A673 (cell line): ENCODE measurements at regions of chr3 and their contacts with region 1.

Region 1: DNA sequence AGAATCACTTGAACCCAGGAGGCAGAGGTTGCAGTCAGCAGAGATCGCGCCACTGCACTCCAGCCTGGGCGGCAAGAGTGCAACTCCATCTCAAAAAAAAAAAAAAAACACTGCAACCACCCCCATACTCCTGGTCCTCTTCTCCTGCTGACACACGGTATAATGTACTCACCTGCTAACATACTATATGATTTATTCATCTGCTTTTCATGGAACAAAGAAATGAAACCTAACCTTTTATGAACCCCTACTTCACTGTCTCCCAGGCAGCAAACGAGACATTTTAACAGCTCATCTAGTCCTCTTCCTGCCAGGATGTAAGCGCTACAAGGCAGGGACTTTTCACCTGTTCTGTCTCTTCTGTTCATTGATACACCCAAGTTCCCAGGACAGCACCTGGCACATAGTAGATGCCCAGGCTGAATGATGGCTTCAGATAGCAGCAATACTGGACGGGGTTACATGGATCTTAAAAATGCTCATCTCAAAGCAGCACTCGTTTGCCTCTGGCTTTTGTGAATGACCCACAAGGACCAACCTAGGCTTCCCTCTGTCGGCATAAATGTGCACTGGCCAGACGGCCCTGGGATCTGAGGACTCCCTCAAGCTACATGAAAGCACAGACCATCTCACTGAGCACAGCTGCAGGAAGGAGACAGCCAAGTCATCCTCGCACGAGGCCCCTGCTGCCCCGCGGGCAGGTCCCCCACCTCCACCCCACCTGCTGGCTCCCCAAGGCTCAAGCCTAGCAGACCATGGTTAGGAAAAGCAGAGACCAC is 20.3 kb downstream of the XXYLT1 start:
- DNase-seq: no peak
- H3K4me3 ChIP-seq: no peak overlapping the region
- H3K27ac ChIP-seq: no peak overlapping the region
- H3K4me1 ChIP-seq: peaks cover 36% of the 10 kb centered on the region
- H3K27me3 ChIP-seq: no peaks in the 10 kb centered on the region
- CTCF ChIP-seq: no peak

Region 2: GRCh38 chr3:194782698-194783404 is 467.8 kb before region 1 on chr3:
- CTCF ChIA-PET with region 1: no interaction called
- POLR2A ChIA-PET with region 1: interaction called, 11 read pairs
- intact Hi-C with region 1: no loop called
- DNase-seq: no peak
- H3K4me3 ChIP-seq: no peak overlapping the region
- H3K27ac ChIP-seq: no peak overlapping the region
- H3K4me1 ChIP-seq: no peaks in the 10 kb centered on the region
- H3K27me3 ChIP-seq: no peaks in the 10 kb centered on the region
- CTCF ChIP-seq: no peak

Region 3: GRCh38 chr3:195352895-195353488 is 102.3 kb after region 1 on chr3:
- CTCF ChIA-PET with region 1: no interaction called
- POLR2A ChIA-PET with region 1: no interaction called
- intact Hi-C with region 1: no loop called
- DNase-seq: peak; percentile 50
- H3K4me3 ChIP-seq: no peak overlapping the region
- H3K27ac ChIP-seq: peak overlapping the region; percentile 53
- H3K4me1 ChIP-seq: peaks cover 6% of the 10 kb centered on the region
- H3K27me3 ChIP-seq: no peaks in the 10 kb centered on the region
- CTCF ChIP-seq: no peak